Activated naive CD4-positive, alpha-beta T cell treated with anti-CD3 and anti-CD28 coated beads for 36 hours (primary cell): ENCODE measurements at regions of chr7 and their contacts with region 1.

Region 1: GRCh38 chr7:105346593-105347322 is 42.0 kb downstream of the SRPK2 start:
- DNase-seq: no peak
- H3K4me3 Mint-ChIP-seq: no peak overlapping the region
- H3K27ac Mint-ChIP-seq: no peak overlapping the region
- H3K4me1 Mint-ChIP-seq: peaks cover 66% of the 10 kb centered on the region
- H3K27me3 Mint-ChIP-seq: no peaks in the 10 kb centered on the region

Region 2: DNA sequence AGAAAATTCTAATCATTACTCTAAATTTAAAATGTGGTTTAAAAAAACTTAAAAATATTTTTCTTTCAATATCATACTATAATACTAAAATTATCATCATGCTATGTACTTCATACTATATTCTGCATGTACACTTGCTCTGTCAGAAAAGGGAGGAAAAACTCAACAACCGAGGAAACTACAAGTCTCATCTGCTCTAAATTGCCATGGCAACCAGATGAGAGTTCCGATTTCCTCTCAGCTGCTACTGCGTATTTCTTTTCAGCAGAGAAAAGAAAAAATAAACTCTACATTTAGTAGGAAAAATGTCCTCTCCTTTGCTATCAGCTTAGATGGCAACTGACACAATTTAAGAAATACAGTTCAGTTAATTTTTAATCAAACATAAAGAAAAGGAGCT is 136.9 kb before region 1 on chr7:
- CTCF ChIA-PET with region 1: no interaction called
- intact Hi-C with region 1: loop called (anchors 1 kb)
- DNase-seq: peak; percentile 28
- H3K4me3 Mint-ChIP-seq: no peak overlapping the region
- H3K27ac Mint-ChIP-seq: no peak overlapping the region
- H3K4me1 Mint-ChIP-seq: peaks cover 65% of the 10 kb centered on the region
- H3K27me3 Mint-ChIP-seq: no peaks in the 10 kb centered on the region

Region 3: DNA sequence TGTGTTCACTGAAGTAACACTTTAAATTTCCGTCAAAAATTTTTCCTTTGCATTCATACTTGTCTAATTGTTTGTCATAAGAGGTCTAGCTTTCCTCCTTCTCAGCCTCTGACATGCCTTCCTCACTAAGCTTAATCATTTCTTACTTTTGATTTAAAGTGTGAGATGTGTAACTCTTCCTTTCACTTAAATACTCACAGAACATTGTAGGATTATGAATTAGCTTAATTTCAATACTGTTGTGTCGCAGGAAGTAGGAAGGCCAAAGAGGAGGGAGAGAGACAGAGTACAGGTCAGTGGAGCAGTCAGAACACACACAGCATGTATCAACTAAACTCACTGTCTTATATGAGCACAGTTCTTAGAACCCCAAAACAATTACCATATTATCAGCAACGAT is 57.1 kb before region 1 on chr7:
- CTCF ChIA-PET with region 1: no interaction called
- intact Hi-C with region 1: loop called (anchors 1 kb)
- DNase-seq: peak; percentile 40
- H3K4me3 Mint-ChIP-seq: no peak overlapping the region
- H3K27ac Mint-ChIP-seq: peak overlapping the region; percentile 14
- H3K4me1 Mint-ChIP-seq: peaks cover 21% of the 10 kb centered on the region
- H3K27me3 Mint-ChIP-seq: no peaks in the 10 kb centered on the region

Region 4: DNA sequence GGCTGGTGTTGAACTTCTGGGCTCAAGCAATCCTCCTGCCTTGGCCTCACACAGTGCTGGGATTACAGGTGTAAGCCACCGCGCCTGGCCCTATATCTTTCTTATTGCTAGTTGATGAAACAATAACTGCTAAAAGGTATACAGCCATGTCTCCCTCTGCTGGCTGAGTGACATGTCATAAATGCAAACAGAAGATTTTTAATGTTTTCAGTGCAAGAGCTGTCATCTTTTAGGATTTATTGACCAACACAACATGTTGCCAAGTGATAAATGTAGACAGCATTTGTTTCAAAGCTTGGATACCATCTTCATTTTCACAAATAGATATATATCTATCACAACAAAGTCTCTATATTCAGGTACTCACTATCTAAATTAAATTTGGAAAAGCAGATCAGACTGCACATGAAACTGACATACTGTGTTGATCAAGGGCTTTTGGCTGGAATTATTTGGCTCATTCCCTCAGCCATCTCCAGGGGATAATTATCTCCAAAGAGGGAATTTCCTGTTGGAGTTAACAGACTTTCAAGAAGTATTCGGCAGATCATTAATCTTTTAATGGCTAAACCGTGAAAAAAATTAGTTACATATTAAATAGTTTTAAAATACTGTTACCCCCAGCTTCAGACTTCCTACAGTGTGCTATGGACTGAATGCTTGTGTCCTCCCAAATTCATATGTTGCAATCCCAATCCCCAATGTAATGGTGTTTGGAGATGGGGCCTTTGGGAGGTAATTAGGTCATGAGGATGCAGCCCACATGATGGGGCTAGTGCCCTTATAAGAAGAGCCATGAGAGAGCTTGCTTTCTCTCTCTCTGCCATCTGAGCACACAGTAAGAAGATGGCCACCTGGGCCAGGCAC is 83.2 kb after region 1 on chr7:
- CTCF ChIA-PET with region 1: interaction called, 3 read pairs
- intact Hi-C with region 1: loop called (anchors 2 kb)
- DNase-seq: peak; percentile 80
- H3K4me3 Mint-ChIP-seq: no peak overlapping the region
- H3K27ac Mint-ChIP-seq: no peak overlapping the region
- H3K4me1 Mint-ChIP-seq: peaks cover 15% of the 10 kb centered on the region
- H3K27me3 Mint-ChIP-seq: no peaks in the 10 kb centered on the region